ENCODE measurements at regions of chr5 and their contacts with region 1.

Region 1: DNA sequence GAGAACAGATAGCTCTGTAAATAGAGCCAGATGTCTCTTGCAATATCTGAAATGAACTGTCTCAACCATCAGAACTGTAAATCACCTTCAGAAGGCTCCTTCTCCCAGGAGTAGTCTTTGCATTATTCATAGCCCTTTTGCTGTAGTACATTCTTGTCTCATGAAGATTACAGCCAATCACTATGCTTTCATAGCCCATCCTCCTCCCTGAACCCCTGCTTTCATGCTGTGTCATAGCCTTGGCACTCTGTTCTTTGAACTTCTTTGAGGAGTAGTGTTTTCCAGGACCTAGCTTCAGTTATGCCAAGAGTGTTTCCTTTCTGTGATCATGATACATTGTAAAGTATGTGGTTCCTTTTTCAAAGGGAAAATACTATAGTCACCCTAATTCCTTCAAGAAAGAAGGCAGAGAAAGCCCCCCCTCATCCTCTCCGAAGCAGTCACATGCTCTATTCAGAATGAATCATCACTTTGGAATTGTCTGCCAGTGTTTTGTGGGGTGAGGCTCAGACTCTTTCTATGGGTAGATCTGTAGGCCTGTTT is 61.1 kb downstream of the GRIA1 start:
- DNase-seq: peak; percentile 90
- H3K4me3 Mint-ChIP-seq: peak overlapping the region; percentile 37
- H3K27ac Mint-ChIP-seq: peak overlapping the region; percentile 94
- H3K4me1 Mint-ChIP-seq: peaks cover 55% of the 10 kb centered on the region
- H3K27me3 Mint-ChIP-seq: no peaks in the 10 kb centered on the region
- CTCF ChIP-seq: no peak

Region 2: DNA sequence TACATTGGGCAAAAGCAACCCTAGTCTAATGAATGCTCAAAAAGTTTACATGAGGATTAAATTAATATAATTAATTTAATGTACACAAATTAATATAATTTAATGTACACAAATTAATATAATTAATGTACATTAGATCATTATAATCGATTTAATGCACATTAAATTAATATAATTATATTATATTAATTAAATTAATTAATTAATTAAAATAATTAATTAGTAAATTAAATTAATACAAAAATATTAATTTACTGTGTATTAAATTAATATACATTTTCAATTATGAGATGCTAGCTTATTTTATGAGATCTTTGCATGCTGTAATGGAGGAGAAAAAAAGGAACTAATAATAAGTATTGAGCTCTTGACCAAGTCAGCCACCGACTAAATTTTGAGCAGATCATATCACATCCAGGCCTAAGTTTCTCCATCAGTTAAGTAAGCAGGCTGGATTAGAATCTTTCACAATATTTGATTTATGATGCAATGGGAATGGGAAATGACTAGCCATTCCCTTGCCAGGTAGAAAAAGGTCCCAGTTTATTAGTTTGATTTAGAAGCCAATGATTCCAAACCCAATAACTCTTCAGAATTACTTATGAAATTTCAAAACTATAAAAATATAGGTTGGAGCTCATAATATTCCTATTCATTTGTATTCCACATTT is 594.5 kb before region 1 on chr5:
- CTCF ChIA-PET with region 1: no interaction called
- POLR2A ChIA-PET with region 1: no interaction called
- intact Hi-C with region 1: no loop called
- DNase-seq: peak; percentile 49
- H3K4me3 Mint-ChIP-seq: no peak overlapping the region
- H3K27ac Mint-ChIP-seq: no peak overlapping the region
- H3K4me1 Mint-ChIP-seq: no peaks in the 10 kb centered on the region
- H3K27me3 Mint-ChIP-seq: no peaks in the 10 kb centered on the region
- CTCF ChIP-seq: no peak

Region 3: DNA sequence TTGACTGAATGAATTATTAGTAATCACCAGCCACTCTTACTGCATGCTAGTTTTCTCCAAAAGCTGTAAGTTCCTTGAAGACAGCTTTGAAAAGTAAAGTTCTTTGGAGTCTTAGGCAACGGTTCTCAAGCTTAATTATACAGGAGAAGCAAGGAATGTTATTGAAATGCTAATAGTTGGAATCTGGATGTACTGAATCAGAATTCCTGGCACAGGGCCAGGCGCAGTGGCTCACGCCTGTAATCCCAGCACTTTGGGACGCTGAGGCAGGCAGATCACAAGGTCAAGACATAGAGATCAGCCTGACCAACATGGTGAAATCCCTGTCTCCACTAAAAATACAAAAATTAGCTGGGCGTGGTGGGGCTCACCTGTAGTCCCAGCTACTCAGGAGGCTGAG is 27.8 kb before region 1 on chr5:
- CTCF ChIA-PET with region 1: interaction called, 3 read pairs
- POLR2A ChIA-PET with region 1: interaction called, 14 read pairs
- intact Hi-C with region 1: no loop called
- DNase-seq: peak; percentile 82
- H3K4me3 Mint-ChIP-seq: no peak overlapping the region
- H3K27ac Mint-ChIP-seq: no peak overlapping the region
- H3K4me1 Mint-ChIP-seq: peaks cover 15% of the 10 kb centered on the region
- H3K27me3 Mint-ChIP-seq: no peaks in the 10 kb centered on the region
- CTCF ChIP-seq: no peak